GM10248 (cell line): ENCODE measurements at regions of chr16 and their contacts with region 1.

Region 1: DNA sequence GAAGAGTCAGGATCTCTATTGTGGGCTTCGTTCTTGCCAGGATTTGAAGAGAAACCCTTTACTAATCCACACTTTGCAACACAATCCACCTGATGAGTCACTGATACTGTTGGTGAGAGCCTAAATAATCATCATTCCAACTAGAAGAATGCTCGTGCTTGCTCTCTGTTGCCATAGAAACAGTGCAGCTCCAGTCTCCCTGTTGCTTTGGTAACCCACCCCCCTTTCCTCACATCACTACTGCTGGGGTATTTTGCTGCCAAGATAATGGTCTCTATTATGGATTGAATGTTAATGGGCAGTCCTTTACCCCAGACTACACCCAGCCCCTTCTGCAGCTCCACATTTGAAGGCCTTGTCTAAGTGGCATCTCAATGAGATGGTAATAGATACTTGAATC is 190.4 kb downstream of the ABCC12 start:
- DNase-seq: no peak
- CTCF ChIP-seq: no peak

Region 2: GRCh38 chr16:47978491-47979163 is 13.2 kb after region 1 on chr16:
- CTCF ChIA-PET with region 1: interaction called, 15 read pairs
- POLR2A ChIA-PET with region 1: no interaction called
- DNase-seq: no peak
- CTCF ChIP-seq: no peak

Region 3: DNA sequence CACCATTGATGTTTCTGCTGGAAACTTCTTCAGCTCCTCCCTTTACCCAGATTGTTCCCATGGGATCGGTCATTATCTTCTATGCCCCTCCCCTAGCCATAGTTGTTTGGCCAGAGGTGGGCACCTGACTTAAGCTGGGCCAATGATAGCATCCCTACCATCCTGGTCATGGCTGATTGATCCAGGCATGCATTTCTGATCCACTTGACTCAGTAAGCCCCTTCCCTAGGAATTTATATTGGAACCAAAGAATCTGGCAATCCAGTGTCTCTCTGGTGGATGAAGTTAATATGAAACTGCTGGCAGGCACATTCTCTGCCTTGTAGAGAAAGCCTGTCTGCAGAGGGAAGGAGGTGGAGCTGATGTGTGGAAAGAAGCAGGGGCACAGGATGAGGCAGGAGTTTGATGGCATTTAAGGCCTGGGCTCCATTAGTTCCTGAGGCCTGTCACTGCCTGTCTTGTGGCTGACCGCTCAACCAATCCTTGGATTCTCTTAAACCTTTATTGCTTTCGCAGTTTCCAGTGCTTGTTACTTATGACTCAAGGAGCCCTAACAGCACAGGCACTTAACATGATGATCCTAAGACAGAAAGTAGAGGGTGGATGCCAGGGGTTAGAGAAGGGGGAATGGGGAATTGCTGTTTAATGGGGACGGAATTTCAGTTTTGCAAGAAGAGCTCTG is 37.9 kb after region 1 on chr16:
- CTCF ChIA-PET with region 1: no interaction called
- POLR2A ChIA-PET with region 1: no interaction called
- DNase-seq: no peak
- CTCF ChIP-seq: no peak

Region 4: GRCh38 chr16:48081656-48082055 is 116.2 kb after region 1 on chr16:
- CTCF ChIA-PET with region 1: no interaction called
- POLR2A ChIA-PET with region 1: no interaction called
- DNase-seq: no peak
- CTCF ChIP-seq: no peak